Prostate gland (tissue), 2 donors: ENCODE measurements at regions of chr16 and their contacts with region 1.

Region 1: DNA sequence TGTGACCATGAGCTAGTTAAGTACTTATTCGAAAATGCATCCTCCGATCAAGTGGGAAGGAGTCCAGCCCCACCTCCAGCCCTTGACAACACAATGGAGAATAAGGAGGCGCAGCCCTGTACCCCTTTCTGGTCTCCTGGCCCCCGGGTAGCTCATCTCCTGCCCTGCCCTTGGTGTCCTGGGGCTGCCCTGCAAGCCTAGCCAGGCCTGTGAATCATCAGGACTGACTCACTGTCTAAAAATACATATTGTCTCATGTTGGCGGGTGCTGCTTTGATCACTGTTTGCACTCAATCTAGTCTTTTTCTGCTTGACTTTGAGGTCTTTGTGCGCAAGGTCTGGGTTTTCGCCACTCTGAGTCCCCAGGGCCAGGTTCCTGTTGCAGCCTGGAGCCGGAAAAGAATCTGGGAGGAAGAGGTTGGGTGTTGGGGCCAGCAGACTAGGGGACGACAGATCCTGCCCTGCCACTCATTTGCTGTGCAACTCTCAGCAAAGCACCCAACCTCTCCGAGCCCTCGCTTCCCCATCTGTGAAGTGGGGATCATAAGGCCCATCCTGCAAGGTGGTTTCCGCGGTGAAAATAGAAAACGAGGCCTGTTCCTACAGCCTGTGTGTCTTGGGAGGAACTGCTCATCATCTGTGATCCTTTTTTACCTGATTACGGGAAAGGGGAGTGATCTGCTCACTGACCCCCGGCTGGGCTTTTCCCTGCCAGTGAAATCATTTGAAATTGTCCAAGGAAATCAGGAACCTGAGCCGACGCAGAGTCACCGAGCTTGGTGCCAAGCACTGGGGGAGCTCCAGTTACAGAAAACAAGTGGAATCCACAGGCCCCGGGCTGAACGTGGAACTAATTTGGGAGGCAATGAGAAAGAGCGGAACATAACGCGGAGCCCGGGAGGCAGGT is 230.4 kb downstream of the PARN start:
- DNase-seq: no peak
- H3K4me3 ChIP-seq: no peak overlapping the region
- H3K27ac ChIP-seq: peak overlapping the region; percentile 45 to 65
- H3K4me1 ChIP-seq: no peaks in the 10 kb centered on the region
- H3K27me3 ChIP-seq: no peaks in the 10 kb centered on the region
- CTCF ChIP-seq: no peak
- POLR2A ChIP-seq: no peak

Region 2: GRCh38 chr16:14300705-14301168 is 98.9 kb before region 1 on chr16:
- intact Hi-C with region 1: loop called (anchors 5 kb)
- DNase-seq: peak; percentile 74
- H3K4me3 ChIP-seq: peak overlapping the region; percentile 85 to 90
- H3K27ac ChIP-seq: peak overlapping the region; percentile 72 to 77
- H3K4me1 ChIP-seq: peaks cover 4% of the 10 kb centered on the region
- H3K27me3 ChIP-seq: no peaks in the 10 kb centered on the region
- CTCF ChIP-seq: peak in 3 of 4 experiments; percentile 66 to 81 (median 66)
- POLR2A ChIP-seq: no peak